Activated T-helper 1 cell treated with anti-CD3 and anti-CD28 coated beads, Interleukin-12 subunit alpha, Interleukin-12 subunit beta, Interleukin-2, Interleukin-4 antibody, amounts not matched to agents 30 ng/mL and 10 ng/mL and 1 ng/mL, durations not matched to agents 14 hours and 24 hours and 36 hours (primary cell): ENCODE measurements at regions of chr2 and their contacts with region 1.

Region 1: GRCh38 chr2:42360890-42361727 is at the start of gene COX7A2L:
- DNase-seq: peak; percentile 92
- H3K4me3 Mint-ChIP-seq: peak within 1 kb of the TSS; percentile 94
- H3K27ac Mint-ChIP-seq: peak within 1 kb of the TSS; percentile 92
- H3K4me1 Mint-ChIP-seq: peaks cover 49% of the 10 kb centered on the region
- H3K27me3 Mint-ChIP-seq: no peaks in the 10 kb centered on the region
- total RNA-seq, gene COX7A2L: 83.3 and 84.7 TPM in 2 replicates

Region 2: GRCh38 chr2:42102024-42102590 is 259.0 kb before region 1 on chr2:
- intact Hi-C with region 1: loop called (anchors 1 kb)
- DNase-seq: peak; percentile 92
- H3K4me3 Mint-ChIP-seq: peak overlapping the region; percentile 73
- H3K27ac Mint-ChIP-seq: peak overlapping the region; percentile 94
- H3K4me1 Mint-ChIP-seq: peaks cover 45% of the 10 kb centered on the region
- H3K27me3 Mint-ChIP-seq: no peaks in the 10 kb centered on the region

Region 3: GRCh38 chr2:42296226-42296625 is 64.9 kb before region 1 on chr2:
- intact Hi-C with region 1: loop called (anchors 2 kb)
- DNase-seq: no peak
- H3K4me3 Mint-ChIP-seq: no peak overlapping the region
- H3K27ac Mint-ChIP-seq: peak overlapping the region; percentile 25
- H3K4me1 Mint-ChIP-seq: peaks cover 50% of the 10 kb centered on the region
- H3K27me3 Mint-ChIP-seq: no peaks in the 10 kb centered on the region

Region 4: GRCh38 chr2:42494355-42495233 is 133.5 kb after region 1 on chr2:
- intact Hi-C with region 1: loop called (anchors 1 kb)
- DNase-seq: peak; percentile 57
- H3K4me3 Mint-ChIP-seq: peak overlapping the region; percentile 89
- H3K27ac Mint-ChIP-seq: peak overlapping the region; percentile 82
- H3K4me1 Mint-ChIP-seq: peaks cover 9% of the 10 kb centered on the region
- H3K27me3 Mint-ChIP-seq: peaks cover 40% of the 10 kb centered on the region

Region 5: DNA sequence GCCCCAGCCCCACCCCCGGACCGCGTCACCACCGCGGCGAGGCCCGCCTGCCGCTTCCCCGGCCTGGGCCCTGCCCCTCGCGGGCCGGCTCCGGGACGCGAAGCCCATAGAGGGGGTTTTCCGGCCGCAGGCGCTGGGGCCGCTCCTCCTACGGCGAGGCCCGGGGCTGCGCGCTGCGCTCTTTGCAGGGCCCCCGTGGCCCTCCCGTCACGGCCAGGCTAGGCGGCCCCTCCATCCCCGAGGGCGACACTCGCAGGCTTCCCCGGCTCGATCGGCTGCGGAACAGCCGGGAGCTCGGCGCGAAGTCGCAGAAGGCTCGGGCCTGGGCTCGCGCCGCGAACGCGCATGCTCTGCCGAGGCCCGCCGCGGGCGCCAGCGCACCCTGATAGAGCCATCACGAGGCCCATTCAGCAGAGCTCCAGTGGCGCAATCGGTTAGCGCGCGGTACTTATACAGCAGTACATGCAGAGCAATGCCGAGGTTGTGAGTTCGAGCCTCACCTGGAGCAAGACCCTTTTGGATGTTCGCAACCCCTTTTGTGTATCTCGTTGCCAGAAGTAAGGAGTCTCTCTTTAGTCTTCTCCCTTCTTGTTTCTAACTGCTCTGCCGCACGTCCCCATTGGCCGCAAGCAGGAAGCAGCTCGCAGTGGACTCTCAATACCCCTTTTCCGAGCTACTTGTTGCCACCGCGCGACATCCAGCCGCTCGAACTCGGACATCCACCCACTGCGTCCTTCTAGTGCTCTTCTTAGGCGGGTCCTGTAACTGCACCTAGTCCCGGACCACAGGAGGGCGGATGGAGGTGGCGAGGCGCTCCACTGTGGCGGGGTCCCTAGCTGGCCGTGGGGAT is 449.2 kb after region 1 on chr2:
- intact Hi-C with region 1: loop called (anchors 1 kb)
- DNase-seq: peak; percentile 94
- H3K4me3 Mint-ChIP-seq: peak overlapping the region; percentile 89
- H3K27ac Mint-ChIP-seq: peak overlapping the region; percentile 100
- H3K4me1 Mint-ChIP-seq: peaks cover 20% of the 10 kb centered on the region
- H3K27me3 Mint-ChIP-seq: peaks cover 21% of the 10 kb centered on the region

Region 6: DNA sequence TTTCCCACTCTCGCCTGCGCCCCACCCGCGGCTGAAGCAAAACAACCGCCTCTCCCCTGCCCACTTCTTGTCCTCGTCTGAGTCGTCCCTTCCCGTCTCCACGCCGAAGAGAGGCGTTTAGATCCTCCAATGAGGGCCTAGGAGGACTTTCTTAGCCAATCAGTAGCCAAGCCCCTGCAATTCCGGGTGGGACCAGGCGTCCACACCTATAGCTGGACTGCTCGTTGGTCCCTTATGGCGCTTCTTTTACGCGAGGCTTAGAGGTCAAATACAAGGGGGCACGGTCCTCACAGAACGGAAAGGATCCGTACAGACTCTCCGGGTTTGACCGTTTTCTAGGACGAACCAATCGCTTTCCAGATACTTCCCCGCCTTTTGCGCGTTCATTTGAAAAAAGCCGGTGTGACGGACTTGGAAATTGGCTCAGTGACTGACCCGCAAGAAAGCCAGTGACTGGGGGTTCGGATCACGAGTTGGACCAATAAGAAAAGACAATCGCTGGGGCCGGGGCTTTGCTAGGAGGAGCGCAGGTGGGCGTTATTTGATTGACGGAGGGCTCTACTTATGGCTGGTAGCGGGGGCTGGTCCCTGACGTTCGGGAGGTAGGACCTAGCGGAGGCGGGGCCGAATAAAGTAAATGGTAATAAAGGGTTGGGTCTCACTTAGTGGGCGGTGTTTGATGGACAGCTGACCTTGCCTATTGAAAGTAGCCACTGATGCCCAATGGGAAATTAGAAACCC is 1807.0 kb after region 1 on chr2:
- intact Hi-C with region 1: loop called (anchors 2 kb)
- DNase-seq: peak; percentile 94
- H3K4me3 Mint-ChIP-seq: peak overlapping the region; percentile 97
- H3K27ac Mint-ChIP-seq: peak overlapping the region; percentile 99
- H3K4me1 Mint-ChIP-seq: peaks cover 41% of the 10 kb centered on the region
- H3K27me3 Mint-ChIP-seq: peaks cover 2% of the 10 kb centered on the region